H1 (cell line): ENCODE measurements at regions of chr16 and their contacts with region 1.

Region 1: GRCh38 chr16:30557957-30558788 is at the start of gene ZNF764:
- DNase-seq: peak; percentile 86 to 88
- H3K4me3 ChIP-seq: peak within 1 kb of the TSS; percentile 58 to 86 (median 76)
- H3K27ac ChIP-seq: peak within 1 kb of the TSS; percentile 60; the same call in 1 of the 2 replicates
- H3K4me1 ChIP-seq: peaks cover 0 to 5% (median 2%) of the 10 kb centered on the region in 4 experiments; a peak in 2 of 7 replicates
- H3K27me3 ChIP-seq: peaks cover 0 to 3% (median 1%) of the 10 kb centered on the region in 4 experiments; a peak in 1 of 7 replicates
- CTCF ChIP-seq: no peak
- EP300 ChIP-seq: no peak
- POLR2A ChIP-seq: peak in 1 of 2 experiments; percentile 23; a peak in 1 of 3 replicates
- RAD21 ChIP-seq: no peak
- total RNA-seq, gene ZNF764: 7.7 and 8.4 TPM in 2 replicates

Region 2: GRCh38 chr16:30445408-30446202 is 112.6 kb before region 1 on chr16 and contains the start of gene SEPHS2:
- CTCF ChIA-PET with region 1: interaction called, 11 read pairs
- POLR2A ChIA-PET with region 1: no interaction called
- DNase-seq: peak; percentile 96 to 97
- H3K4me3 ChIP-seq: peak within 1 kb of the TSS; percentile 71 to 86 (median 78)
- H3K27ac ChIP-seq: peak within 1 kb of the TSS; percentile 44; the same call in 1 of the 2 replicates
- H3K4me1 ChIP-seq: peaks cover 0 to 9% (median 6%) of the 10 kb centered on the region in 4 experiments; a peak in 5 of 7 replicates
- H3K27me3 ChIP-seq: peaks cover 0 to 4% (median 1%) of the 10 kb centered on the region in 4 experiments; a peak in 1 of 7 replicates
- CTCF ChIP-seq: peak; percentile 28 to 39 (median 33); a peak in 3 of 4 replicates
- EP300 ChIP-seq: no peak
- POLR2A ChIP-seq: peak; percentile 65 to 88
- RAD21 ChIP-seq: no peak; a peak in 2 of 4 replicates
- total RNA-seq, gene SEPHS2: 61.8 and 62.0 TPM in 2 replicates

Region 3: GRCh38 chr16:30472328-30472942 is 85.7 kb before region 1 on chr16 and contains the start of gene ITGAL:
- CTCF ChIA-PET with region 1: no interaction called
- POLR2A ChIA-PET with region 1: no interaction called
- DNase-seq: no peak
- H3K4me3 ChIP-seq: no peak within 1 kb of the TSS
- H3K27ac ChIP-seq: no peak within 1 kb of the TSS
- H3K4me1 ChIP-seq: peaks cover 0 to 3% (median 0%) of the 10 kb centered on the region in 4 experiments; a peak in 1 of 7 replicates
- H3K27me3 ChIP-seq: peaks cover 0 to 2% (median 0%) of the 10 kb centered on the region in 4 experiments; a peak in 1 of 7 replicates
- CTCF ChIP-seq: no peak
- EP300 ChIP-seq: no peak
- POLR2A ChIP-seq: no peak
- RAD21 ChIP-seq: no peak
- total RNA-seq, gene ITGAL: not detected in 2 replicates

Region 4: GRCh38 chr16:30499284-30499683 is 58.9 kb before region 1 on chr16:
- CTCF ChIA-PET with region 1: no interaction called
- POLR2A ChIA-PET with region 1: no interaction called
- DNase-seq: no peak
- H3K4me3 ChIP-seq: no peak overlapping the region
- H3K27ac ChIP-seq: no peak overlapping the region
- H3K4me1 ChIP-seq: no peaks in the 10 kb centered on the region
- H3K27me3 ChIP-seq: no peaks in the 10 kb centered on the region; a peak in 1 of 7 replicates
- CTCF ChIP-seq: no peak
- EP300 ChIP-seq: no peak
- POLR2A ChIP-seq: no peak
- RAD21 ChIP-seq: no peak

Region 5: DNA sequence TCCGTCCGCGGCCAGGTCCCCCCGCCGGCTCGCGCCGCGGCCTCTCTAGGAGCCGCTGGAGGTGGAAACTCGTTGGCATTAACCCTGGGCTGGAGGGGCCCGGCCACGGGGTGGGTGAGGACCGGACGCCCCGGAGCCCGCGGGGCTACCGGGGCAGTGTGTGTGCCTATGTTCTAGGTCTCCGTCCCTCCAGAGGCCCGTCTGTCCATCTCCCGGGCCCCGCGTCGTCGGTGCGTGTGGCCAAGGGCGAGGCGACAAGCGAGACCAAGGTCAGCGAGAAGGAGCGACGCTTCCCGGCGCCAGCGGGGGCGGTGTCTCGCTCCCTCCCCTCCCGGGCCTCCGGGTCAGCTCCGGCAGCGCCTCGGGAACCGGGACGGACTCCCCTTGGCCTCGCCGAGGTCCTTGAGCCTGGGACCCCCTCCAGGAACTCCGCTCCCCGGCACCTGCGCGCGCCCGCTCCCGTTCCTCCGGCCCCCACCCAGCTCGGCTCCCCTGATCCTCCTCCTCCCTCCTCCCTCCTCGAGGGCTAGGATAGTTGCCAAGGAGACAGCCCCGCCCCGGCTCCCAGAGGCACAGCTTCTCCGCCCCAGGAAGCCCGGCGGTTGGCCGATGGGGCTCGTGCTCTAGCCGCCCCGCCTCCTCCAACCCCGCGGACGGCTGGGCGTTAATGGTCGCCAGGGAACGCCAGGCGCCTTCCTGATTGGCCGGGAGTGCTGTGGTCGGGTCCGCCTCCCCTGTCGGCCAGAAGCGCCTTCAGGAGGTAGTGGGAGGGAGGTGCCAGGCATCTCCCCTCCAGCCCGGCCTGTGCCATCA is 31.1 kb before region 1 on chr16:
- CTCF ChIA-PET with region 1: interaction called, 4 read pairs
- POLR2A ChIA-PET with region 1: interaction called, 22 read pairs
- DNase-seq: peak; percentile 91 to 97
- H3K4me3 ChIP-seq: peak overlapping the region; percentile 71 to 99 (median 94)
- H3K27ac ChIP-seq: peak overlapping the region; percentile 93
- H3K4me1 ChIP-seq: peaks cover 3 to 6% (median 6%) of the 10 kb centered on the region in 4 experiments; a peak in 6 of 7 replicates
- H3K27me3 ChIP-seq: no peaks in the 10 kb centered on the region
- CTCF ChIP-seq: peak in 2 of 3 experiments; percentile 19 to 25; a peak in 2 of 4 replicates
- EP300 ChIP-seq: no peak
- POLR2A ChIP-seq: peak in 1 of 2 experiments; percentile 81; a peak in 2 of 3 replicates
- RAD21 ChIP-seq: no peak; a peak in 1 of 4 replicates

Region 6: DNA sequence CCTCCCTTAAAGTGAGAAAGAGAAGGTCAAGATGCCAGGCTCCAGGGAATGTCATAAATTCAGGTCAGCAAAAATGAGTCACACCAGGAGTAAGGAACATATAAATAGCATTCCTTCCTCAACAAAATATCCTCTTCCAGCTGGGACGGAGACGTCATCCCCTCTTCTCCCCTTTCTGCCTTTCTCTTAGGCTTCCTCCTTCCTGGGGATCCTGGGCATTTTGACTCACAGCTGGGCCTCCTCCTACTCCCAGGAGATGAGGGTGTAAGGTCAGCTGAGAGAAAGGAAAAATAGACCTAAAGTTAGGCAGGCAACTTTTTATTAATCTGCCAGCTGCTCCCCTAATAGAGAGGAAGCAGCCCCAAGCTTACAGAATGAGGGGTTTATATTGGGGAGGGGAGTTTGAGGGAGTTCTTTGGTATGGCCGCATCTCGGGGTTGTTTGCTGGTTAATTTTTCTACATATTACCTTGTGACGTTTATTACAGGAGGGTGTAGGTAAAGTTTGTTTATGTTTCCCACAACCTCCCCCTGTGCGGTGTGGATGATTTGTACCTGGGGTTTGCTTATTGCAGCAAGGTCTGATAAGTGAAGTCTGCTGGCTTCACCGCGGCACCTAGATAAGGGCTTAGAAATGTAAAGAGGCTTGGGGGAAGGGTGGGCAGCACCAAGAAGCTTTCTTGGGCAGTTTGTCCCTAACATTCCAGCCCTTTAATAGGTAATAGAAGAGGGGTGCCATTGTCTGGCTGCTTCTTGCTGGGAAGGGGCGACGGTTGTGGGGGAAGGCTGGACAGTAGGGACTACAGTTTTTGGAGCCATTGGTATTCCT is 16.5 kb before region 1 on chr16:
- CTCF ChIA-PET with region 1: interaction called, 12 read pairs
- POLR2A ChIA-PET with region 1: interaction called, 121 read pairs
- DNase-seq: no peak
- H3K4me3 ChIP-seq: peak overlapping the region in 1 of 4 experiments; percentile 30; a peak in 2 of 8 replicates
- H3K27ac ChIP-seq: 0 out of 2 replicates have a peak overlapping the region, but pooled peaks have one; percentile 31
- H3K4me1 ChIP-seq: peaks cover 5 to 22% (median 19%) of the 10 kb centered on the region in 4 experiments
- H3K27me3 ChIP-seq: no peaks in the 10 kb centered on the region
- CTCF ChIP-seq: no peak
- EP300 ChIP-seq: no peak
- POLR2A ChIP-seq: no peak
- RAD21 ChIP-seq: no peak

Region 7: GRCh38 chr16:30571695-30572600 is 13.8 kb after region 1 on chr16 and contains the start of gene ZNF688:
- CTCF ChIA-PET with region 1: interaction called, 3 read pairs
- POLR2A ChIA-PET with region 1: interaction called, 32 read pairs
- DNase-seq: peak; percentile 90 to 91
- H3K4me3 ChIP-seq: peak within 1 kb of the TSS; percentile 78 to 89 (median 82)
- H3K27ac ChIP-seq: peak within 1 kb of the TSS; percentile 64; the same call in 1 of the 2 replicates
- H3K4me1 ChIP-seq: peaks cover 0 to 9% (median 2%) of the 10 kb centered on the region in 4 experiments; a peak in 5 of 7 replicates
- H3K27me3 ChIP-seq: no peaks in the 10 kb centered on the region
- CTCF ChIP-seq: no peak
- EP300 ChIP-seq: no peak
- POLR2A ChIP-seq: peak in 1 of 2 experiments; percentile 42
- RAD21 ChIP-seq: no peak
- total RNA-seq, gene ZNF688: 3.5 and 3.7 TPM in 2 replicates

Region 8: DNA sequence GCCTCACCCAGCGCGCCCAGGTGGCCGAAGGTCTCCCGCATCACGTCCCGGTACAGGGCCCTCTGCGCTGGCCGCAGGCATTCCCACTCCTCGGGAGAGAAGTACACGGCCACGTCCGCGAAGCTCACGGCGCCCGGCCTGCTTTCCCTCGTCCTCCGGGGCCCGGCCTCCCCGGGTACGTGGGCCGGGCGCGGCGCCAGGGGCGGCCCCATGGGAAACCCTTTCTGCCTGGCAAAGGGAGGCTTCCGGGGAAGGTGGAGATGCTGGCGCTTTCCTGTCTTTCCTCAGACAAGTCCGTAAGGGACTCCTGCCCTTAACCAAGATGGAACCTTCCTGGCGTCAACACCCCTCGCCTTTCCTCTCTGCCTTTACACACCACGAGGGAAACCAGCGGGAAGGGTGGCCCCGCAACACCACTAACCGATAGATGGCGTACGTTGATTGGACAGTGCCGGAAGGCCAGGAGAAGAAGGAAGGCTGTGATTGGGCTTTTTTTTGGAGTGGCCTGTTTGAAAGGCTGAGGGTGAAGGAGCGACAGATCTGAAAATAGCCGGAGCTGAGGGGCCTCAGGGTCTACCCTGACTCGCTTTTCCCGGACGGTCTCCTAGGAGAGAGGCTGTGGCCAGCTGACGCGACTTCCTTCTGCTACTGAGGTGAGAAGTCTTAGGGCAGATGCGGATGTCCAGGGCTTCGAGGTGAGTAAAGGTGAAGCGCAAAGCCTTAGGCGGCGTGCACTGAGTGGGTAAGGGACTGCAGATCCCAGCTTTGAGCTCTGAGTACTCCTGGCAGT is 27.4 kb after region 1 on chr16 and contains the start of gene ZNF785:
- CTCF ChIA-PET with region 1: interaction called, 6 read pairs
- POLR2A ChIA-PET with region 1: interaction called, 14 read pairs
- DNase-seq: peak; percentile 91 to 93
- H3K4me3 ChIP-seq: peak within 1 kb of the TSS; percentile 78 to 89 (median 84)
- H3K27ac ChIP-seq: peak within 1 kb of the TSS; percentile 86
- H3K4me1 ChIP-seq: no peaks in the 10 kb centered on the region; a peak in 3 of 7 replicates
- H3K27me3 ChIP-seq: no peaks in the 10 kb centered on the region
- CTCF ChIP-seq: peak in 2 of 3 experiments; percentile 26 to 29; a peak in 3 of 4 replicates
- EP300 ChIP-seq: peak in 1 of 2 experiments; percentile 73; a peak in 1 of 3 replicates
- POLR2A ChIP-seq: peak; percentile 12 to 43; a peak in 2 of 3 replicates
- RAD21 ChIP-seq: peak; percentile 6 to 20; a peak in 3 of 4 replicates
- total RNA-seq, gene ZNF785: 12.9 and 14.8 TPM in 2 replicates

Region 9: GRCh38 chr16:30609926-30610839 is 52.0 kb after region 1 on chr16 and contains the start of gene ZNF689:
- CTCF ChIA-PET with region 1: interaction called, 16 read pairs
- POLR2A ChIA-PET with region 1: interaction called, 17 read pairs
- DNase-seq: peak; percentile 98 to 99
- H3K4me3 ChIP-seq: peak within 1 kb of the TSS; percentile 88 to 98 (median 92)
- H3K27ac ChIP-seq: peak within 1 kb of the TSS; percentile 95
- H3K4me1 ChIP-seq: peaks cover 0 to 3% (median 2%) of the 10 kb centered on the region in 4 experiments; a peak in 3 of 7 replicates
- H3K27me3 ChIP-seq: no peaks in the 10 kb centered on the region
- CTCF ChIP-seq: no peak
- EP300 ChIP-seq: no peak
- POLR2A ChIP-seq: peak; percentile 78 to 86
- RAD21 ChIP-seq: 0 out of 4 replicates have a peak, but pooled peaks of 1 of the 2 experiments have one; percentile 1
- total RNA-seq, gene ZNF689: 14.2 and 14.3 TPM in 2 replicates